Activated CD4-positive, alpha-beta memory T cell treated with anti-CD3 and anti-CD28 coated beads for 36 hours (primary cell): ENCODE measurements at regions of chr10 and their contacts with region 1.

Region 1: DNA sequence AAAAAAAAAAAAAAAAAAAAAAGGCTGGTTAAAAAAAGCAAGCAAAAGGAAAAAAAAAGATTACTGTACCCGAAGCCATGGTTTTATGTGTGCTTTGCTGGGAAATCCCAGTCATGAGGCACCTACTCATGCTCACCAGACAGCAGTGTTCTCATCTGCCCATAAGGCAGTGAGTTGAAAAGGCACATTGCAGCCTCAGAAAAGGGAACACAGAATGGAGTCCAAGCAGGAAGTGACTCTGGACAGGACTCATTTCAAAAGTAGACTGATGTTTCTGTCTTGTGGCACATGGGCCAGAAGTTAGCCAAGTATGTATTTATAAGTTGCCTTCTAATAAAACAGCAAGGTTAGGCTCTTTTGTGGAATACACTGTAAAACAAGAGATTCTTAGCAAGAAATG is 40.2 kb downstream of the PDSS1 start:
- DNase-seq: peak; percentile 75
- H3K4me3 Mint-ChIP-seq: no peak overlapping the region
- H3K27ac Mint-ChIP-seq: peak overlapping the region; percentile 97
- H3K4me1 Mint-ChIP-seq: peaks cover 58% of the 10 kb centered on the region
- H3K27me3 Mint-ChIP-seq: no peaks in the 10 kb centered on the region

Region 2: GRCh38 chr10:26486991-26487850 is 250.5 kb before region 1 on chr10:
- CTCF ChIA-PET with region 1: no interaction called
- POLR2A ChIA-PET with region 1: no interaction called
- intact Hi-C with region 1: loop called (anchors 2 kb)
- DNase-seq: peak; percentile 86
- H3K4me3 Mint-ChIP-seq: peak overlapping the region; percentile 44
- H3K27ac Mint-ChIP-seq: peak overlapping the region; percentile 86
- H3K4me1 Mint-ChIP-seq: peaks cover 66% of the 10 kb centered on the region
- H3K27me3 Mint-ChIP-seq: no peaks in the 10 kb centered on the region

Region 3: DNA sequence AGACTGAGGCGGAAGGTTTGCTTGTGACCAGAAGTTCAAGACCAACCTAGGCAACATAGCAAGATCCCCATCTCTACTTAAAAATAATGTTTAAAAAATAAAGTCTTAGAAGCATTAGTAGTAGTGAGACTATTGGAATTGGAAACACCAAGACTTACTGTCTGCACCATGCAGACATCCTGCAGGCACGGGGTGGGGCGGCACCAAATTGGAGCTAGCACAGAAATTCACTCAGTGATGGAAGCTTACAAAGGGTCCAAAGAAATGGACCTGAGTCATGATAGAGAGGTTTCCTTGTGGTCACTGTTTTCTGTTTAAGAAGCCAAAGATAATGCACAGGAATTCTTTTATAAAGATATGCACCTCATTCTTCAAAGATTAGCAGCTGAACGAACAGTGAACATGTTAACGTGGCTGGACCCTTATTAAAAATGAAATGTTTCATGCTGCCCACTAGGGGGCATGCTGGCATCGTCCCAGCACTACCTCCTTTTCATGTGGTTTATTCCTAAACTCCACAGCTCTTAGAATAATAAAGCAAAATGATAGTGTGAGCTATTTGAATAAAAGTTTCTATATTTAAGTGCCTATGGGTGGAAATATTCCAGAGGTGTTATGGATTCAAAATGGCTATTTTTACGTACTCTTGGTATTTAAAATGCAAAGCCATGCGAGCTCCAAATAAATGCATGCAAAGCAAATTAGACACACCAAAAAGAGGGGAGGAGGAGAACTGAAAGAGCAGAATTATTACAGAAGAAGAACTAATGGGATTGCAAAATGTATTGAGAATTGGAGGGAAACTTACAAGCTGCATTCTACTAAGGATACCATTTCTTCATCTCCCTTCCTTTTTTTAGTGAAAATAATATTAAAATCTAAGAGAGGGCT is 11.6 kb before region 1 on chr10:
- CTCF ChIA-PET with region 1: interaction called, 26 read pairs
- POLR2A ChIA-PET with region 1: interaction called, 4 read pairs
- intact Hi-C with region 1: loop called (anchors 1 kb)
- DNase-seq: peak; percentile 58
- H3K4me3 Mint-ChIP-seq: no peak overlapping the region
- H3K27ac Mint-ChIP-seq: no peak overlapping the region
- H3K4me1 Mint-ChIP-seq: peaks cover 4% of the 10 kb centered on the region
- H3K27me3 Mint-ChIP-seq: no peaks in the 10 kb centered on the region

Region 4: GRCh38 chr10:27099916-27100812 is 362.4 kb after region 1 on chr10 and contains the start of gene ANKRD26:
- CTCF ChIA-PET with region 1: no interaction called
- POLR2A ChIA-PET with region 1: no interaction called
- intact Hi-C with region 1: loop called (anchors 5 kb)
- DNase-seq: peak; percentile 97
- H3K4me3 Mint-ChIP-seq: peak within 1 kb of the TSS; percentile 85
- H3K27ac Mint-ChIP-seq: peak within 1 kb of the TSS; percentile 95
- H3K4me1 Mint-ChIP-seq: peaks cover 40% of the 10 kb centered on the region
- H3K27me3 Mint-ChIP-seq: peaks cover 2% of the 10 kb centered on the region
- total RNA-seq, gene ANKRD26: 6.7 to 7.1 TPM

Region 5: DNA sequence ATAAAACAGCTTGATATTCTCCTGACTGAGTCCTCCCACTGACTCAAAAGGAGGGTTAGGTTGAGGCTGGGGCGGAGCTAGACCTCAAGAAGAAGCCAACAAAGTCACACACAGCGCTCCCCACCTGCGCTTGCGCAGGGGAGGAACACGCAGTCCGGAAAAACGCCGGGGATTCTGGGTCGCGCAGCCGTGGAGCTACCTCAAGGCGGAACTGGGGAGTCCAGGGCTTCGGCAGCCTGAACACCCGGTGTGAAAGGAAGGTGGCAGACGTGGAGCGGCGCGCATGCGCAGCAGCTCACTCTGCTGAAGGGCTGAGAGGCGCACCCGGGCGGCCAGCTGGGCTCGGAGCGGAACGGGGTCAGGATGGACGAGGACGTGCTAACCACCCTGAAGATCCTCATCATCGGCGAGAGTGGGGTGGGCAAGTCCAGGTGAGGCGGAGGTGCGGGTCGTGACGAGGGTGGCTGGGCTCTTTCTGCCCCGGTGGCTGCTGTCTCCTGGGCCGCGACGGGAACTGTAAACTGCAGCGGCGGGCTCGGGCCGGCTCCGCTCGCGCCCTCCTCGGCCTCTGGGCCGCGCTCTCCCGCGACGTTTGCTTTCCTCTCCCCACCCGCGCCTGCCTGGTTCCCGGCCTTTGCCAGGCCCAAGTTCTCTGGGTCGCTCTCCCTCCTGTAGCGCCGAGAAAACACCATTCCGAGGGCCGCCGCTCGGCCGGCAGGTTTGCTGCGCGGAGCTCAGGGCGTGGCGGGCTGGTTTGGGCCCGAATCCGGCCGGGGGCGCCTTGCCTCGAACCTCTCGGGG is 766.5 kb after region 1 on chr10 and contains the start of gene RAB18:
- CTCF ChIA-PET with region 1: no interaction called
- POLR2A ChIA-PET with region 1: no interaction called
- intact Hi-C with region 1: loop called (anchors 10 kb)
- DNase-seq: peak; percentile 99
- H3K4me3 Mint-ChIP-seq: peak within 1 kb of the TSS; percentile 100
- H3K27ac Mint-ChIP-seq: peak within 1 kb of the TSS; percentile 96
- H3K4me1 Mint-ChIP-seq: peaks cover 51% of the 10 kb centered on the region
- H3K27me3 Mint-ChIP-seq: no peaks in the 10 kb centered on the region
- total RNA-seq, gene RAB18: 51.7 to 54.0 TPM